ENCODE measurements at regions of chr12 and their contacts with region 1.

Region 1: GRCh38 chr12:62146318-62146717 is 113.9 kb upstream of the USP15 start:
- DNase-seq: no peak
- H3K4me3 ChIP-seq: no peak overlapping the region
- H3K27ac ChIP-seq: no peak overlapping the region
- H3K4me1 ChIP-seq: no peaks in the 10 kb centered on the region
- H3K27me3 ChIP-seq: no peaks in the 10 kb centered on the region
- CTCF ChIP-seq: no peak
- POLR2A ChIP-seq: no peak

Region 2: DNA sequence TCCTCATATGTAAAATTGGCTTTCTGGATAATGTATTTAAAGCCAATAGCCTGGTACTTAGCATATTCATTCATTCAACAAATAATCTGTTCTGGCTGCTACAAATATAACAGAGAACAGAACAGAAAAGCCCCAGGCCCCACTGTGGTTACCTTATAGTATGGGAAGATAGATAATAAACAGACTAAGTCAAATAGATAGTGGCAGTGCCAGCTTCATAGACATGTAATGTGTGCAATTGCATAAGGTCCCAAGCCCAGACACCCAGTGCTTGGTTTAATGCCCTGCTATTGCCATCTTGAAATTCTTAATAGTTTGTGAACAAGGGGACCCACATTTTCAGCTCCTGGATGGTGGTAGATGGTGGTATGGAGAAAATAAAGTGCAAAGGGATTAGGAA is 206.3 kb before region 1 on chr12:
- intact Hi-C with region 1: no loop called
- DNase-seq: no peak
- H3K4me3 ChIP-seq: no peak overlapping the region
- H3K27ac ChIP-seq: no peak overlapping the region
- H3K4me1 ChIP-seq: no peaks in the 10 kb centered on the region
- H3K27me3 ChIP-seq: no peaks in the 10 kb centered on the region
- CTCF ChIP-seq: no peak
- POLR2A ChIP-seq: no peak

Region 3: DNA sequence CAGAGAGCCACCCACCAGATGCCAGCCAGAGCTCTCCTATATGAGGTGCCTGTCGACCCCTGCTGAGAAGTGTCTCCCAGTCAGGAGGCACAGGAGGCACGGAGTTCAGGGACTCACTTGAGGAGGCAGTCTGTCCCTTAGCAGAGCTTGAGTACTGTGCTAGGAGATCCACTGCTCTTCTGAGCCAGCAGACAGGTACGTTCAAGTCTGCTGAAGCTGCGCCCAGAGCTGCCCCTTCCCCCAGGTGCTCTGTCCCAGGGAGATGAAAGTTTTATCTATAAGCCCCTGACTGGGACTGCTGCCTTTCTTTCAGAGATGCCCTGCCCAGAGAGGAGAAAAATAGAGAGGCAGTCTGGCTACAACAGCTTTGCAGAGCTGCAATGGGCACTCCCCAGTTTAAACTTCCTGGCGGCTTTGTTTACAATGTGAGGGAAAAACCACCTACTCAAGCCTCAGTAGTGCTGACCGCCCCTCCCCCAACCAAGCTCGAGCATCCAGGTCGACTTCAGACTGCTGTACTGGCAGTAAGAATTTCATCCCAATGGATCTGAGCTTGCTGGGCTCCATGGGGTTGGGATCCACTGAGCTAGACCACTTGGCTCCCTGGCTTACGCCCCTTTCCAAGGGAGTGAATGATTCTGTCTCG is 32.8 kb before region 1 on chr12:
- intact Hi-C with region 1: loop called (anchors 2 kb)
- DNase-seq: no peak
- H3K4me3 ChIP-seq: no peak overlapping the region
- H3K27ac ChIP-seq: no peak overlapping the region
- H3K4me1 ChIP-seq: no peaks in the 10 kb centered on the region
- H3K27me3 ChIP-seq: no peaks in the 10 kb centered on the region
- CTCF ChIP-seq: no peak
- POLR2A ChIP-seq: no peak